HEK293 (cell line): ENCODE measurements at regions of chrX and their contacts with region 1.

Region 1: DNA sequence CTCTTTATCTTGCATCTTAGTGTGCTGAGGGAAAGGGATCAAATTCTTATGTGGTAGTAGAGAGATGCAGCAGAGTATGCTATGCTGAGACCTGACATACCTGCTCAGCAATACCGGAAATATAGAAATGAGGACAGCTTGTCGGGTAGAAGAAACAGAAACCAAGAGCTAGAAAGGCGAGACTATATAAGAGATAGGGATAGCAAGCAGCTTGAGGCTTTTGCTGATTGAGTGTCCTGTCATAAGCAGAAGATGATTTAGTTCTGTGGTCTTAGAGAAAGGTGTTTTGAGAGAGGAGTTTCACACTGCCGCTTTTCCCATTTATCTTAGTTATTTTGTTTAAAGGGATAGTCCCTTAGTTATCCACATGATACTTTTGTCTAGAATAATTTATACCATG is 31.7 kb downstream of the USP9X start:
- H3K4me3 ChIP-seq: no peak overlapping the region
- H3K27ac ChIP-seq: no peak overlapping the region
- H3K4me1 ChIP-seq: peaks cover 60% of the 10 kb centered on the region
- CTCF ChIP-seq: no peak

Region 2: GRCh38 chrX:40922307-40922706 is 194.6 kb before region 1 on chrX:
- CTCF ChIA-PET with region 1: interaction called, 12 read pairs
- POLR2A ChIA-PET with region 1: no interaction called
- H3K4me3 ChIP-seq: no peak overlapping the region
- H3K27ac ChIP-seq: no peak overlapping the region
- H3K4me1 ChIP-seq: no peaks in the 10 kb centered on the region
- CTCF ChIP-seq: no peak

Region 3: DNA sequence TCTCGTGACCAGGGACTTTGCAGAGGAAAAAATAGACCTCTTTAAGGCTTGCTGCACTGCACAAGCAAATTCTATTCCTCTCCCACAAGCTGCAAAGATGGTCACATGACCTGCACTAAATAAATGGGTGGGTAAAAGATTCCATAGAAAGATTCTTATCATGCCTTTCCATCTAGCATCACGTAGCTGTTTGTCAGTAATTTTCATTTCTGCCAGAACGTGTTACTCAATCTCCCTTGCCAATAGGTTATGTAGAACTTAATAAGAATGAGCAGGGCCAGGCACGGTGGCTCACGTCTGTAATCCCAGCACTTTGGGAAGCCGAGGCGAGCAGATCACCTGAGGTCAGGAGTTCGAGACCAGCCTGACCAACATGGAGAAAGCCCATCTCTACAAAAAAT is 89.5 kb before region 1 on chrX:
- CTCF ChIA-PET with region 1: interaction called, 15 read pairs
- POLR2A ChIA-PET with region 1: no interaction called
- H3K4me3 ChIP-seq: no peak overlapping the region
- H3K27ac ChIP-seq: no peak overlapping the region
- H3K4me1 ChIP-seq: peaks cover 7% of the 10 kb centered on the region
- CTCF ChIP-seq: no peak

Region 4: DNA sequence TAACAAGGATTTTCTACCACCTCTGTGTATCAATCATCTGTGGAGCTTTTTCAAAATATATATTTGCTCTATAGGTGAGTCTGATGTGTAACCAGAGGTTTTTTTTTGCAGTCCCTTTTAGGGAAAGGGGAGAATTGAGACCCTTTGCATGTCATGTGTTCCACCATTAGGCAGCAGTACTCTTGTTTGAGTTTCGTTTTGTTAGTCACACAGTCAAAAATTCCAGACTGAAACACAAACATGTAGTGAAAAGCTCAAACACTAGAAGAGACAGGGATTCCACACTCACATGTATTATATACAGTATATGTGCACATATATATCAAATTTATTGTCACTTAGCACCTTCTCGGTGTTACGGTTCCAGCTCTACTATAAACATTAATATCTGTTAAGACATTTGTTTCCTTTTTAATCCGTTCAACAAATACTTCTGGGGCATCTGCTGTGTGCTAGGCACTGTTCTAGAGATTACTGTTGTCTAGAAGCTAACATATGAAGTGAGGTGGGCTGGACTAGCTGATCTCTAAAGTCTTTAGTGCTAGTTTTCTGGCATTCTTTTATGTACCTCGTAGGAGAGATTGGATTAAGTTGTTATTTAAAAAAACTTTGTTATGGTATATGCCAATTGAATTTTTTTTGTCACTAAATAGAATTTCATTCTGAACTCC is 26.2 kb before region 1 on chrX:
- CTCF ChIA-PET with region 1: interaction called, 25 read pairs
- POLR2A ChIA-PET with region 1: interaction called, 11 read pairs
- H3K4me3 ChIP-seq: peak overlapping the region; percentile 61
- H3K27ac ChIP-seq: no peak overlapping the region
- H3K4me1 ChIP-seq: peaks cover 47% of the 10 kb centered on the region
- CTCF ChIP-seq: no peak

Region 5: GRCh38 chrX:41105005-41105404 is 11.9 kb before region 1 on chrX:
- CTCF ChIA-PET with region 1: interaction called, 34 read pairs
- POLR2A ChIA-PET with region 1: interaction called, 7 read pairs
- H3K4me3 ChIP-seq: no peak overlapping the region
- H3K27ac ChIP-seq: peak overlapping the region; percentile 19; the same call in 1 of the 2 replicates
- H3K4me1 ChIP-seq: peaks cover 39% of the 10 kb centered on the region
- CTCF ChIP-seq: no peak

Region 6: GRCh38 chrX:41137589-41137988 is 20.6 kb after region 1 on chrX:
- CTCF ChIA-PET with region 1: interaction called, 12 read pairs
- POLR2A ChIA-PET with region 1: no interaction called
- H3K4me3 ChIP-seq: no peak overlapping the region
- H3K27ac ChIP-seq: no peak overlapping the region
- H3K4me1 ChIP-seq: 0 out of 2 replicates have a peak, but pooled peaks cover 3% of the 10 kb centered on the region
- CTCF ChIP-seq: no peak